Right ventricle myocardium inferior (tissue), 1 donor: ENCODE measurements at regions of chr14 and their contacts with region 1.

Region 1: DNA sequence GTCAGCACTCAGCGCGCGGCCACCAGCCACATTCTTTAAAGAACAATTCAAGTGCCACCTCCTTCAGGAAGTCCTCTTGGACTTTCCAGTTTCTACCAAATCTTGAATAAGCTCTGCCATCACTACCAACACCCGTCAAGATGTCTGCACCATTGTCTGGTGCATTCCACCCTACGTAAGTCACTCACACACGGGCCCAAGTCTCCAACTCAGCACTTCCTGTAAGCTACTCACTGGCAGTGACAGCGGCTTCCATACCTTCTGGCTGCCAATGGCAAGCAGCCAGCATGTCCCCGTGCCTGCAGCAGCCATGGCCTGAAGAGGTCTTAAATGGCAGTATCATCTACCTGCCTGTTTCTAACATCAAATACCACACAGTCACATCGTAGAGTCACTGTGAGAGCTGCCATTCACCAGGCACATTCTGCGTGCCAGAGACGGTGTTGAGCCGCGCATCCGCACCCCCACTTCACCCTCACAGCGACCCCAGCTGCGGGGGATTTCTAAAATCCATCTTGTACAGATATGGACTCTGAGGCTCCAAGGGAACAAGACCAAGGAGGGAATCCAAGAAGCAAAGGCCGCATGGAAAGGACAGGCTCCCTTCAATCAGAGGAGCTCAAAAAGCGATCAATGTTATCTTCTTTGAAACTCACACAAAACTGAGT is 48.3 kb downstream of the CDC42BPB start:
- DNase-seq: peak; percentile 79
- ATAC-seq: peak; percentile 49

Region 2: GRCh38 chr14:103057365-103058096 is 48.5 kb after region 1 on chr14 and contains the start of gene CDC42BPB:
- intact Hi-C with region 1: loop called (anchors 5 kb)
- DNase-seq: peak; percentile 95
- ATAC-seq: peak; percentile 97
- total RNA-seq, gene CDC42BPB: 68.9 TPM